ENCODE measurements at regions of chr12 and their contacts with region 1.

Region 1: GRCh38 chr12:4849115-4849541 is 60.6 kb upstream of the KCNA1 start:
- DNase-seq: peak; percentile 54
- CTCF ChIP-seq: peak; percentile 50

Region 2: DNA sequence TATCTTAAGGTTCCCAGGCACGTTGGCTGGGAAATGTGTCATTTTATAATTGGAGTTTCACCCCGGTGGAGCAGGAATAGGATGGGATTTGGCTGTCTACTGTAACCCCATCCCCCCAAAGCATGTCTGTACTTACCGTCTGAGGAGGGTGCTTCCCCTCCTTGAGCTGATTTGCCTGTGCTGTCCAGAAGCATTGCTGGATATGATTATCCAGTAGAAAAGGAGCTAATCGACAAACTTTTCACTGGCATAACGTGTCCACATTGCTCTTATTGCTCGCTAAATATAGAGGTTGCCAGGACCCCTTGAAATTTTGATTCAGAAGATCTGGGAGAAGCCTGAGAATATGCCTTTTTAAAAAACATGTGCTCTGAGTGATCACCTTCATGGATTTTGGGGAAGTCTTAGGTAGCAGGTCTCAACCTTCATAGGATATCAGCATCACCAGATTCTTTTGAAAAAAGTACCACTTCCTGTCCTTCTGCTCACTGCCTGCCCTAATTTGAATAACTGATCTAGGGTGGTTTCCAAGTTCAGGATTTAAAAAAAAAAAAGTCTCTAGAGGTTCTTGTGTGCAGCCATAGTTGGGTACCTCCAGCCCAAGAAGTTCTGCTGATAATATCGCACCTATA is 19.9 kb before region 1 on chr12:
- CTCF ChIA-PET with region 1: interaction called, 45 read pairs
- POLR2A ChIA-PET with region 1: no interaction called
- DNase-seq: peak; percentile 76
- CTCF ChIP-seq: no peak

Region 3: GRCh38 chr12:4908684-4909409 is 59.7 kb after region 1 on chr12:
- CTCF ChIA-PET with region 1: interaction called, 119 read pairs
- POLR2A ChIA-PET with region 1: no interaction called
- DNase-seq: peak; percentile 58
- CTCF ChIP-seq: peak; percentile 47

Measured in GM10248 (cell line).